ENCODE measurements at regions of chr19 and their contacts with region 1.

Region 1: DNA sequence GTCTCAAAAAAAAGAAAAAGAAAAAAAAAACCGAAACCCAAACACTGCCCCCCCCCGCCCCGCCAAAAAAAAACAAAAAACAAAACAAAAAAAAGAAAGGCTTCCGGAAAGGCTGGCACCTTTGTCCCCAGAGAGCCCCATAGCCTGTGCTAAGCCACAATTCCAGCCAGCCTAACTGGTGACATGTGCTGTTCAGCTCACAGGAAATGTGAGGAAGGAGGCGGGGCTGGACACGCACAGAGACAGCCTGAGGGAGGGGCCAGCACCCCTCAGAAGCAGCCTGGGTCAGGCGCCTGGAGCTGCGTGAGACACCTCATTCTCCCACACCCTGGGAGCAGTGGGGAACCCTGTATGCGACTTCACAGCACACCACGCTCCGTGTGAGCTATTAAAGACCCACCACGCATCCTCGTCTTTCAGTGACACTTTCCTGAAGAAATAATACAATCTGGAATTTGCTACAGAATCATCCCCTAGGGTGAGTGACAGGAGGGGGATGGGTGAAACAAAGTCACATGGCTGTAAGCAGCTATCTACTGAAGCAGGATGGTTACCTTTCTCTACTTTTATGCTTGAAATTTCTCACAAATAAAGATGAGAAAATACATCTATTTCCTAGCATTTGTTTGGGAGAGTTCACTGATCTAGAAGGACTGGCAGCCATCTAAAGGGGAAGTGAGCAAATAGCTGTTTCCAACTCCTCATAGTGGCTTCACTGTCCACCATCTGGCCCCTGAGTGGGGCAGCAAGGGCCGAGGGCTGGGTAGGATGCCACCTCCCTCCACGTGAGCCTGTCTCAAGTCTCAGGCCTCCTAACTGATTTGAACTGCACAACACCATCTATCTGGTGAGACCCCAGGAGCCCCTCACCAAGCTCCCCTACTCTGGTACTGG is 12.3 kb upstream of the SLC35E1 start:
- DNase-seq: peak; percentile 78
- ATAC-seq: peak; percentile 46
- H3K4me3 Mint-ChIP-seq: peak overlapping the region; percentile 94
- H3K27ac Mint-ChIP-seq: peak overlapping the region; percentile 99
- H3K4me1 Mint-ChIP-seq: peaks cover 92% of the 10 kb centered on the region
- H3K27me3 Mint-ChIP-seq: no peaks in the 10 kb centered on the region
- CTCF ChIP-seq: no peak

Region 2: DNA sequence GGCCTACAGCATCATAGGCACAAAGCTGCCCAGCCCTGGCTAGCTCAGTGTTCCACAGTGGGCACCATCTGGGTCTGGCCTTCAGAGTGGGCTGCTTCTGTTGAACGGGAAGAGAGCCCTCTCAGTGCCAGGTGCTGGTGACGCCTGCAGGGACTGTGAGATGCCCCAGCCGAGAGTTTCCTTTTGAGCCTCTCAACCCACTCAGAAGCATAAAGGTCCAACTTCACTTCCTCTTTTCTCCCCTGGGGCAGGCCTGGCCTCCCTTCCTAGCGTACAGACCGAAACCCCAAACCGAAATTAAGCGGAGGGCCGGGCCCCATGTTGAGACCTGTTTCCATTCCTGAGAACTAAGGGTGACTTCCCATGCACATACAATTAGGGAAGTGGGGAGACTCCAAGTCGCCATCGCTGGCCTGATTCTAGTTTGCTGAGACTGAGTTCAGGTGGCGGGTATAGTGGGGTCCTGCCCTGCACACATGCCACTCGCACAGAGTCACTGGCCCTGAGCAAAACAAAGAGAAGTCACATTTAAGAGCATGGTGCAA is 465.9 kb before region 1 on chr19:
- CTCF ChIA-PET with region 1: no interaction called
- POLR2A ChIA-PET with region 1: interaction called, 5 read pairs
- intact Hi-C with region 1: loop called (anchors 2 kb)
- DNase-seq: peak; percentile 76
- ATAC-seq: peak; percentile 87
- H3K4me3 Mint-ChIP-seq: peak overlapping the region; percentile 73
- H3K27ac Mint-ChIP-seq: peak overlapping the region; percentile 98
- H3K4me1 Mint-ChIP-seq: peaks cover 80% of the 10 kb centered on the region
- H3K27me3 Mint-ChIP-seq: no peaks in the 10 kb centered on the region
- CTCF ChIP-seq: no peak

Region 3: DNA sequence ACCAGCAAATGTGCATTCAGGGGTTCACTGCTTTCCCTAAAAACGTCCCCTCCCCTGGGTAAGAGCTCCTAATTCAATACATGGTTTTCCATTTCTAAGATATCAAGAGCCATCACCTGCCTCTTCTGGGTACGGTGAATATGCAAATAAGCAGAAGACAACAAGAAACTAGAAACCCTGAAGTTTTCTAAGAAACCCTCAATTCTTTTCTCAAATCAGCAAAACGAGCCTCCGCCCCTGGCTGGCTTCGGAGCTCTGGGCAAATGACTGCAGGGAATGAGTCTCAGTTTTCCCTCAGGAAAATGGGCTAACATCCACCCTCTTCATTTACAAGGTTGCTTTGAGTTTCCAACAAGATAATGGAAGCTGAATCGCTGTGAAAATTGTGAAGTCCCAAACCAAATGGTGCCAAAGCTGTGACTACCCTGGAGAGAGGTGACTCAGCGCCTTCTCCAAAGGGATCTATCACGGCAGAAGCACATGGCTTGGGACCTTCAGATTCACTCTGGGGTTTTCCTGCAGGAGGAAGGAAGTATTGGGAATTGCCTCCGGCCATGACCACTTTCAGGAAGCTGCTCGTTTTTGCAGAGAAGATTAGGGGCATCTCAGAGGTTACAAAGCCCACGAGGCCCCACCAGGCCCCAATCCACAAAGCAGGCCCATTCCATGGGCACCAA is 233.2 kb before region 1 on chr19:
- CTCF ChIA-PET with region 1: no interaction called
- POLR2A ChIA-PET with region 1: no interaction called
- intact Hi-C with region 1: no loop called
- DNase-seq: no peak
- ATAC-seq: no peak
- H3K4me3 Mint-ChIP-seq: peak overlapping the region; percentile 58
- H3K27ac Mint-ChIP-seq: peak overlapping the region; percentile 44
- H3K4me1 Mint-ChIP-seq: peaks cover 47% of the 10 kb centered on the region
- H3K27me3 Mint-ChIP-seq: no peaks in the 10 kb centered on the region
- CTCF ChIP-seq: no peak

Region 4: GRCh38 chr19:16371540-16371986 is 212.9 kb before region 1 on chr19:
- CTCF ChIA-PET with region 1: no interaction called
- POLR2A ChIA-PET with region 1: interaction called, 9 read pairs
- intact Hi-C with region 1: loop called (anchors 1 kb)
- DNase-seq: peak; percentile 77
- ATAC-seq: peak; percentile 78
- H3K4me3 Mint-ChIP-seq: peak overlapping the region; percentile 78
- H3K27ac Mint-ChIP-seq: no peak overlapping the region
- H3K4me1 Mint-ChIP-seq: peaks cover 33% of the 10 kb centered on the region
- H3K27me3 Mint-ChIP-seq: no peaks in the 10 kb centered on the region
- CTCF ChIP-seq: no peak

Region 5: DNA sequence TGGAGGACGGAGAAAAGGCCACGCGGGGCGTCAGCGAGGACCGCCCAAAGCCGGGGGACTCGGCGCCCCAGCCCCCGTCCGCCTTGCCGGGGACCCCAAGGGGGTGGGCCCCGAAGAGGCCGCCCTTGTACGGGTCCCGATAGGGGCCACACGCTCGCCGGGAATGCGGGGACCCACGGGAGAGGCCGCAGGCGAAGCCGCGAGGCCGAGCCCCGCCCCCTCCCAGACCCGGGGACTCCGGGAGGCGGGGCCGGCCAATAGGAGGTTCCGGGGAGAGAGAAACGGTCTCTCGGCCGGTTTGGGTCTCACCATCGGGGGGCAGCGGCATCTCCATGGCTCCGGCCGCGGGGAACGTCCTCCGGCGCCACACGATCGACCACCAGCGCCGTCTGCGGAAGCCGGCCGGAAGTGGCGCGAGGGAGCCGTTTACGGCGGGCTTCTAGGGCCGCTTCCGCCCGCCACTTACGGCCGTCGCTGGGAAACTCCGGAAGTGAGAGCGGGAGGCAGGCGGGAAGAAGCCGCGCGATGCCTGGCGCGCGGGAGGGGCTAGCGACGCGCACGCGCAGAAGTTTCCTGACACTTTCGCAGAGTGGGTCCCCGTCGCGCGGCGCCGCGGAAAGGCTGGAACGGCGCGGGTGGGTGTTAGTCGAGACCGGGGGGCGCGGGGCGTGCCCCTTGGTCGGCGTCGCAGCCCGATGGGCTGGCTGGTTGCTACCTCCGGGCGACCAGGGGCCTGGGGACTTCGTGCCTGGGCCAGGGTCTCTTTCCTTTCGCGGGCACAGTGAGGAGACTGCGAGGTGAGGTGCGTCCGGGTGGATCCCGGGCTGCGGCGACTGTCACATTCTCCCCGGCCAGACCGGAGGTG is 42.2 kb before region 1 on chr19 and contains the start of gene CHERP:
- CTCF ChIA-PET with region 1: interaction called, 6 read pairs
- POLR2A ChIA-PET with region 1: interaction called, 93 read pairs
- intact Hi-C with region 1: loop called (anchors 1 kb)
- DNase-seq: peak; percentile 93
- ATAC-seq: peak; percentile 82
- H3K4me3 Mint-ChIP-seq: peak within 1 kb of the TSS; percentile 86
- H3K27ac Mint-ChIP-seq: peak within 1 kb of the TSS; percentile 76
- H3K4me1 Mint-ChIP-seq: peaks cover 61% of the 10 kb centered on the region
- H3K27me3 Mint-ChIP-seq: no peaks in the 10 kb centered on the region
- CTCF ChIP-seq: no peak
- total RNA-seq, gene CHERP: 70.9 and 89.3 TPM in 2 replicates

Region 6: DNA sequence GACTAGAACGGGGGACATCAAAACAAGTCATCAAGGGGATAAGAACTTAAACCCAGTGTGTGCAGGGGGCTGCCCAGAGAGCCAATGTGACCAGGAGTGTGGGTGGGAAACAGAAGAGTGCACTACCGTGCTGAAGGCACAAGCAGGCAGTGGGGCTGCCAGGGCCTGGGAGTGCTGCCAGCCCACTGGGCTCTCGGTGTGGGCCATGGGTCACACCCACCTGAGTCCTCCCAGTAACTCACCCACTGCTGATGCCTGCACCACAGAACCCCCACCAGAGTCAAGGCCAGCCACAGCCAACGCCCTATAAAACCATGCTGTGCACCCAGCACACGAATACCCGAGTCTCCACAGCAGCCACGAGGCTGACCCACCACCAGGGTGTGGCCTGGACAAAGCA is 35.0 kb after region 1 on chr19:
- CTCF ChIA-PET with region 1: interaction called, 4 read pairs
- POLR2A ChIA-PET with region 1: interaction called, 242 read pairs
- intact Hi-C with region 1: no loop called
- DNase-seq: no peak
- ATAC-seq: no peak
- H3K4me3 Mint-ChIP-seq: no peak overlapping the region
- H3K27ac Mint-ChIP-seq: peak overlapping the region; percentile 46
- H3K4me1 Mint-ChIP-seq: peaks cover 89% of the 10 kb centered on the region
- H3K27me3 Mint-ChIP-seq: no peaks in the 10 kb centered on the region
- CTCF ChIP-seq: no peak

Region 7: GRCh38 chr19:16829010-16829821 is 244.7 kb after region 1 on chr19 and contains the start of gene SIN3B:
- CTCF ChIA-PET with region 1: no interaction called
- POLR2A ChIA-PET with region 1: no interaction called
- intact Hi-C with region 1: loop called (anchors 5 kb)
- DNase-seq: peak; percentile 95
- ATAC-seq: peak; percentile 88
- H3K4me3 Mint-ChIP-seq: peak within 1 kb of the TSS; percentile 86
- H3K27ac Mint-ChIP-seq: peak within 1 kb of the TSS; percentile 77
- H3K4me1 Mint-ChIP-seq: peaks cover 46% of the 10 kb centered on the region
- H3K27me3 Mint-ChIP-seq: peaks cover 28% of the 10 kb centered on the region
- CTCF ChIP-seq: no peak
- total RNA-seq, gene SIN3B: 63.7 and 73.1 TPM in 2 replicates